HepG2 (cell line): ENCODE measurements at regions of chr12 and their contacts with region 1.

Region 1: DNA sequence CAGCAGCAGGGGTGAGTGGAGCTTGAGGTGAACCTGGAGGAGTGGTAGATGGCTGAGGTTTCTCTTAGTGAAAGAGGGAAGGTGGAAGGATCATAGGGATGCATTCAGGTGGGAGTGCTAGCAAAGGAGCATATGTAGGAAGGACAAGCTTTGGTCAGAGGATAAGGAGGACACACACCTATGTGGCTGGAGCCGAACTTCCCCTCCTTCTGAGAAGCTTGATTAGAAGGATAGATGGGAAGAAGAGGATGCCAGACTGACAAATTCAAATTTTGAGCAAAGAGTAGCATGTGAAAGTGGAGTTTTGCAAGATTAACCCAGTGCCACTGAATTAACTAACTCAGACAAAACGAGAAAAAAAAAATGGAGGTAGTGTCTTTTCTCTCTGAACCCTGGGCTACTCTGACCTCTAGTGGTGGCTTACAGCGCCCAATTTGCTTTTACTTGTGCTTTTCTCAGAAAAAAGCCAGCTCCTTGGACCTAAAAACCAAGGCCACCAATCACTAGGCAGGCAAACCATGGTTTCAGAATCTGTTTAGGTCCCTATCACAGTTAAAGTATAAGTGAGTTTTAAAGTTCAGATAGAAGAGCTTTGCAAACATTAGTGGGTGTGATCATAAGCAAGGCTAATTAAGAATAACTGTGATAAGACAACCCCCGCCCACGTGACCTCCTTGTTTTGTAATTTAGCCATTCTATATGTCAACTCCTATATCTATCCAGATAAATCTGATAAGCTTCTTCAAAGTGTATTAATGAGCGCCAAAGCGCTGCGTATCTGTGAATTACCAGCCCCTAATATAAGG is 15.5 kb downstream of the EMP1 start:
- DNase-seq: peak; percentile 47
- ATAC-seq: peak; percentile 68; the same call in 2 of the 3 replicates
- H3K4me3 ChIP-seq: peak overlapping the region in 1 of 3 experiments; percentile 32; a peak in 1 of 6 replicates
- H3K27ac ChIP-seq: no peak overlapping the region
- H3K4me1 ChIP-seq: peaks cover 7% of the 10 kb centered on the region
- H3K27me3 ChIP-seq: peaks cover 0 to 26% of the 10 kb centered on the region in 2 experiments; a peak in 2 of 5 replicates
- CTCF ChIP-seq: peak; percentile 76
- EP300 ChIP-seq: no peak
- POLR2A ChIP-seq: no peak
- RAD21 ChIP-seq: peak; percentile 67

Region 2: DNA sequence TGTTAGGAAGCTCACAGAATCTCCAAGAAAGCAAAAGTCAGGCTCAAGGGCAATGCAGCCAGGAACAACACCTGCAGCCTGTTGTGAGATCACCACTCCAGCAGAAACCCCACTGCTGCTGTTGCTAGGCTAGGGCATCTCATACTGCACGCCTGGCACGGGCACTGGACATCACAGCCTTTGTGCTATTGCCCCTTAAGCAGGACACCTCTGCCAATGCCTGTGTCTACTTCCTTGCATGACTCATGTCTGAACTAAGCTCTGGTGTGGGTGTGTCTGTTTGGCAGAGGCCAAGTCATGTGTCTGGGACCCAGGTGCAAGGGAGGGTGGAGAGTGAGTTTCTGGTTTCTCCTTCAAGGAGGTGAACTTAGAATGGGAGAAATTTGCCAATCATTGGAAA is 408.9 kb before region 1 on chr12:
- CTCF ChIA-PET with region 1: no interaction called
- POLR2A ChIA-PET with region 1: no interaction called
- in situ Hi-C with region 1: loop called (anchors 25 kb)
- intact Hi-C with region 1: loop called (anchors 10 kb)
- DNase-seq: peak; percentile 62
- ATAC-seq: peak; percentile 79
- H3K4me3 ChIP-seq: no peak overlapping the region
- H3K27ac ChIP-seq: no peak overlapping the region
- H3K4me1 ChIP-seq: peaks cover 36% of the 10 kb centered on the region
- H3K27me3 ChIP-seq: no peaks in the 10 kb centered on the region; a peak in 1 of 5 replicates
- CTCF ChIP-seq: no peak
- EP300 ChIP-seq: no peak
- POLR2A ChIP-seq: no peak
- RAD21 ChIP-seq: no peak

Region 3: DNA sequence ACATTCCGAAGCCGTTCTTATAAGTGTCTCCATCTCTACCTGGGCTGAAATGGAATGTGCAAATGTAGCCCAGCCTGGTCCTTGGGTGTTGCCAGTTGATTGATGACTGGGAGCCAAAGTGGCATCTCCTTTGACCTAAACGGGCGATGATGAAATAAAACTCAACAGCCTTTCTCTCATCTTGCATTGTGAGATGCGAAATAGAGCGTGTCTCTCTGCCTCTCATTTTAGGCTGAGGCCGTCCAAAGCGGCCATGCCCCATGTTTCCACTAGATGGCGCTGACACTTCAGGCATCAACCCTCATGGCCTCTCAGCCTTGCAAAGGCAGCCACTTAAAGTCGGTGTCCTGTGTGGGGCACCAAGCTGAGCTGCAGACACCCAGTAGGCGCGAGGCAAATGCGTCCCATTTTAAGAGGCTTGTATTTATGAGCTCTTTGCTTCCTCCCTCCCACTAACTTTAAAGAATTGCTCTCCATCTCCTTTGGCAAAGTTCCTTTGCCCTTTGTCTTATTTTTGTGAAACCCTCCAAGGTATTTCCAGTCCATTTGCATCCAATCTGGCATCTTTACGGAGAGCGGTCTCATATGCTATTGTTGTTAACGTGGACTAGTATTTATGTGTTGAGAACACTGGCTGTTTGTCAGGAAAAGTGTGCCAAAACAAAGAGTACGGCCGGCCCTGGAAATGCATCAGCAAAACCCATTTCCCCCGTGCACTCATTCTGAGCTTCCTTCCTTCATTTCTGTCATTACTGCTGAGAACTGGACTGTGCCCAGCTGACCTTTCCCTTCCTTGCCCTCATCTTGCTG is 295.7 kb before region 1 on chr12:
- CTCF ChIA-PET with region 1: interaction called, 17 read pairs
- POLR2A ChIA-PET with region 1: no interaction called
- in situ Hi-C with region 1: loop called (anchors 5 kb)
- intact Hi-C with region 1: loop called (anchors 1 kb)
- DNase-seq: peak; percentile 71
- ATAC-seq: peak; percentile 98
- H3K4me3 ChIP-seq: peak overlapping the region in 1 of 3 experiments; percentile 8; a peak in 1 of 6 replicates
- H3K27ac ChIP-seq: no peak overlapping the region
- H3K4me1 ChIP-seq: peaks cover 18% of the 10 kb centered on the region
- H3K27me3 ChIP-seq: peaks cover 4 to 16% of the 10 kb centered on the region in 2 experiments
- CTCF ChIP-seq: peak; percentile 98
- EP300 ChIP-seq: no peak
- POLR2A ChIP-seq: no peak
- RAD21 ChIP-seq: peak; percentile 92

Region 4: DNA sequence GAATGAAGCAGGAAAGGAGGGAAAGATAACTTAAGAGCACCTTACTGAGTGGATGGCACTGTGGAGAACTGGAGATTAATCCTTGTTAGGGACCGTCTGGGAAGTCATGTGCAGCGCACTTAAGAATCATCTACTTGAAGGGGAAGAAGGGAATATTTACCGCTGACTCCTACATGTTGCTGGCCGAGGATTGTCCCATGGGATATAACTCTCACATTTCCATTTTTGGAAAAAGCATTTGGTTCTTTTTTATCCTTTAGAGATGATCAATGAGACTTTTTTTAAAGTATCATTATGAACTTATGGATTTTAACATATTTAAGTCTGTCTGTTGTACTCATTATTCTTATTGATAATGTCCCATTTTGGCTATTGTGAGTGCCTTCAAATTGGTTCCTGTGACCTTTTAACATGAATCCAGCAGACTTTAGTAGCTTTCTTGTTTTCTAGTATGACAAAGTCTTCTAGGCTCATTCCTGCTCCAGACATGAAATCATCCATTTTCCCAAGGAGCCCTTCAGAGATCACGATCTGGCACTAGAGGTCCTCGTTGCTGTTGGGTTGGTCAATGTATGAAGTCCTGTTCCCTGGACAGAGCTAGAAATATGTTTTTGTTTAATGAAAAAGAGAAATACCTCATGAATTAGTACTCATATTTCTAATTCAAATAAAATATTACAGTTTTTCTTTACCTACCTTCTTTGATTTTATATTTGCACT is 188.1 kb before region 1 on chr12:
- CTCF ChIA-PET with region 1: interaction called, 3 read pairs
- POLR2A ChIA-PET with region 1: no interaction called
- in situ Hi-C with region 1: no loop called
- intact Hi-C with region 1: loop called (anchors 1 kb)
- DNase-seq: peak; percentile 11
- ATAC-seq: peak; percentile 58; the same call in 1 of the 3 replicates
- H3K4me3 ChIP-seq: no peak overlapping the region
- H3K27ac ChIP-seq: no peak overlapping the region
- H3K4me1 ChIP-seq: no peaks in the 10 kb centered on the region
- H3K27me3 ChIP-seq: no peaks in the 10 kb centered on the region
- CTCF ChIP-seq: peak; percentile 48
- EP300 ChIP-seq: no peak
- POLR2A ChIP-seq: no peak
- RAD21 ChIP-seq: no peak